Heart left ventricle (tissue), 16 donors: ENCODE measurements at regions of chr3 and their contacts with region 1.

Region 1: DNA sequence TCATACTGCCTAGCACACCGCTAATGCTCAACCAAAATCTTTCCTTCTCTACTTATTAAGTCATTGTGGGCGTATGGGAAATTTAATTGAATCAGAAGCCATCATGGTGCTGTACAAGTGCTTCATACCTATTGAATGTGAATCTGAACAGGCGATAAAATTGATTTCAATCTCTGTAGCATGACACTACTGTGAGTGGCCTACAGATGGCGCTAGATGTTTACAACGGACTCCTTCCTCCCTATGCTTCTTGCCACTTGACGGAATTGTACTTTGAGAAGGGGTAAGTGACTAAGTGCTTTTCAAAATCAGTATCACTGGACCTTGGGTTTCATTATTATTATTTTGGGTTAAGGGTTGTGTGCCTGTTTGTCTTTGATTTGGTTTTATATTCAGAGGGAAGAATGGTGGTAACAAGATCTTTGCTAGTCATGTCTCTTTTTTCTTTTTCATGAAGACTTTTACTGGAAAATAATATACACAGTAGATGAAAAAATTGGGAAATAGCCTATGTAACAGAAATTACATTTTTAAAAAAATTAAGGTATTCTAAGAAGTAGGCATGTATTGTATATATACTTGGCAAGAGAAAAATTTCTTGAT is 35.4 kb downstream of the ACP3 start:
- DNase-seq: peak in 4 of 5 donors; percentile 40 to 50 (median 44)
- ATAC-seq: peak in 3 of 4 donors; percentile 52 to 78 (median 78)
- H3K4me3 ChIP-seq: no peak overlapping the region
- H3K27ac ChIP-seq: no peak overlapping the region
- H3K4me1 ChIP-seq: peaks cover 0 to 5% (median 0%) of the 10 kb centered on the region in 12 donors
- H3K27me3 ChIP-seq: no peaks in the 10 kb centered on the region
- CTCF ChIP-seq: peak; percentile 81 to 95 (median 88)
- POLR2A ChIP-seq: no peak

Region 2: GRCh38 chr3:132399054-132399929 is 46.6 kb after region 1 on chr3:
- intact Hi-C with region 1: loop called in 9 of 10 experiments (anchors 1 to 5 kb)
- DNase-seq: no peak
- ATAC-seq: peak in 3 of 4 donors; percentile 42 to 74 (median 62)
- H3K4me3 ChIP-seq: no peak overlapping the region
- H3K27ac ChIP-seq: no peak overlapping the region
- H3K4me1 ChIP-seq: peaks cover 0 to 5% (median 0%) of the 10 kb centered on the region in 12 donors
- H3K27me3 ChIP-seq: no peaks in the 10 kb centered on the region
- CTCF ChIP-seq: peak; percentile 59 to 82 (median 72)
- POLR2A ChIP-seq: no peak

Region 3: GRCh38 chr3:132445817-132446216 is 93.2 kb after region 1 on chr3:
- intact Hi-C with region 1: loop called in 2 of 10 experiments (anchors 5 to 10 kb)
- DNase-seq: no peak
- ATAC-seq: peak in 2 of 4 donors; percentile 40 to 70
- H3K4me3 ChIP-seq: no peak overlapping the region
- H3K27ac ChIP-seq: peak overlapping the region in 1 of 12 donors; percentile 77
- H3K4me1 ChIP-seq: peaks cover 0 to 57% (median 25%) of the 10 kb centered on the region in 12 donors
- H3K27me3 ChIP-seq: no peaks in the 10 kb centered on the region
- CTCF ChIP-seq: no peak
- POLR2A ChIP-seq: no peak

Region 4: GRCh38 chr3:132456571-132456970 is 103.9 kb after region 1 on chr3:
- intact Hi-C with region 1: loop called in 1 of 10 experiments (anchors 10 kb)
- DNase-seq: no peak
- ATAC-seq: no peak
- H3K4me3 ChIP-seq: no peak overlapping the region
- H3K27ac ChIP-seq: no peak overlapping the region
- H3K4me1 ChIP-seq: peaks cover 0 to 8% (median 0%) of the 10 kb centered on the region in 12 donors
- H3K27me3 ChIP-seq: no peaks in the 10 kb centered on the region
- CTCF ChIP-seq: no peak
- POLR2A ChIP-seq: no peak

Region 5: DNA sequence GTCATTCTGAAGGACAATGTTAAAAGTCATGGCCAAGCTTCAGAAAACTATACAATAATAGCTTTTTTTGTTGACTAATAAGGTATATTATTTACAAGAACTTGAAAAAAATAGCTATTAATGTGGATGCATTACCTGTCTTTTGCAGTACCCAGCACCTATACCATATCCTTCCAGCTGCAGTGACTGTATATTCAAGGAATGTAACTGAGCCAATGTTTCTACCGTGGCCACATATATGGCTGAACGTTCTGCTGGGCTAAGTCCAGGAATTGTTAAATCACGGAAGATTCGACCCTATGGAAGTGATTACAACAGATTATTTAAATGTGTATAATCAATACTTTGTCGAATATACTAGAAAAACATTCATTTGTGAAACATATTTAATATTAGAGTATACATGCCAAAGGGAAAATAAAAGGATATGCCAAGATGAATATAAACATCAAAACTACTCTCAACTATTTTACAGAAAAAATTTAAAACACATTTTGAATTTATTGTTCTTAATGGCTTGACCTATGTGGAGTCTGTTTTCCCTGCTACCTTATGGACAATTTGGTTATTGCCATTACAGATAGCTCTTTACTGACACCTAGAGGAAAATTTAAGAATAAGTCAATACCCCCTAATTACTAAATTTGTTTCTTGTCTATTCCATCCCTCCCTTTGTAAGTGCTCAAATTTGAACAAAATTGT is 289.3 kb after region 1 on chr3:
- intact Hi-C with region 1: loop called in 2 of 10 experiments (anchors 5 to 10 kb)
- DNase-seq: no peak
- ATAC-seq: peak in 2 of 4 donors; percentile 57 to 76
- H3K4me3 ChIP-seq: no peak overlapping the region
- H3K27ac ChIP-seq: no peak overlapping the region
- H3K4me1 ChIP-seq: peaks cover 0 to 6% (median 0%) of the 10 kb centered on the region in 12 donors
- H3K27me3 ChIP-seq: no peaks in the 10 kb centered on the region
- CTCF ChIP-seq: peak; percentile 65 to 90 (median 82)
- POLR2A ChIP-seq: no peak